Mammary epithelial cell (primary cell): ENCODE measurements at regions of chr2 and their contacts with region 1.

Region 1: GRCh38 chr2:215386566-215386965 is 49.3 kb downstream of the FN1 start:
- DNase-seq: no peak
- H3K4me3 ChIP-seq: no peak overlapping the region
- H3K27ac ChIP-seq: no peak overlapping the region
- H3K4me1 ChIP-seq: no peaks in the 10 kb centered on the region
- H3K27me3 ChIP-seq: no peaks in the 10 kb centered on the region
- CTCF ChIP-seq: no peak

Region 2: DNA sequence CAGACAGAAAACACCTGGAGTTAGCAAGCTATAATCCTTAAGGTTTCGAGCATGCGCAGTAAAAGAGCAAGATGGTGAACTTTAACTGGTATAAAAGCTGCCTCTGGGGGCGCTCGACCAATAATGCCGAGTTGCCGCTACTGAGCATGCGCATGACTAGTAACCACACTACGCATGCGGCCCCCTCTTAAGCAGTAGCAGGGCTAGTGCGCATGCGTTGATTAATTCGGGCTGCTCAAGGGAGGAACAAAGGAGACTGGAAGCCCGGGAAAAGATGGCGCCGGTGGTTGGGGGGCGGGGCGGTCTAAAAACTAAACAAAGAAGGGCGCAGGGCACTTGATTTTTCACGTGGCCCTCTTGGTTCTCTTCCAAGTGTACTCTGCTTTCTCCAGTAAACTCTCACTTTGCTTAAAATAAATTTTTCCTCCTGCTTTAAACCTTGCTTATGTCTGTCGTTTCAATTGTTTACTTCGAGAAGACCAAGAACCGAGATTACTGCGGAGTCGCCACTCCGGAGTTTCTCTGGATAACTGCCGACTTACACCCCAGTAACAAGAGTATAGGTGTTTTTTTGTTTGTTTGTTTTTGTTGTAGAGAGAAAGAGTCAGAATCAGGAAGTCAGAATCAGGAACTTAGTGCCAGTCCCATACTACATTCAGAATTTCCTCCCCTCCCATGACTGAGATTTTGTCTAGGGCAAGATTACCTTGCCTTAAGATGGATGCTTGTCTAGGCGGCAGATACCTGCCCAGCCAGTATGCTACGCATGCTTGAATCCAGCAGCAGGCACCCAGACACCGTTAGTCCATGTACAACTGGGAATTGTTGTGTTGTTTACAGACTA is 728.4 kb after region 1 on chr2:
- CTCF ChIA-PET with region 1: interaction called, 11 read pairs
- dilution Hi-C with region 1: no loop called
- in situ Hi-C with region 1: no loop called
- intact Hi-C with region 1: no loop called
- DNase-seq: peak; percentile 95
- H3K4me3 ChIP-seq: peak overlapping the region; percentile 37 to 84 (median 56)
- H3K27ac ChIP-seq: peak overlapping the region; percentile 80
- H3K4me1 ChIP-seq: peaks cover 21% of the 10 kb centered on the region
- H3K27me3 ChIP-seq: no peaks in the 10 kb centered on the region
- CTCF ChIP-seq: peak; percentile 81 to 94

Region 3: DNA sequence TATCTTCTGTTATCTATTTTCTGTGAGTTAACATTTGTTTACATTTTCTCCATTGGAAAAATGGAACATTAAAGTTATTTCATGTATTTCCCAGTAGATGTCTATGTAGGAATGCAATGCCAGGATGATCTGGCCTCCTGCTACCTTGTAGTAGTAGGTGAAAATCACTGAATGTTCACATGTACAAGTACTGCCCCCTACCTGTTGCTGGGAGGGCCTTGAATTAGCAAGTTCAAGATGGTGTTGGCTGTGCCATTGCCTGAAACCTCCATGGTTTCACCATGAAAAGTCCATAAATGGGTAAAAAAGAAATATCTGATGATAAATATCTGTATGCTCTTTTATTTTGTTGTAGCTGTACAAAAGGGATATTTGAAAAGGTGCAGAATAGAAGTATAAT is 753.3 kb after region 1 on chr2:
- CTCF ChIA-PET with region 1: no interaction called
- dilution Hi-C with region 1: no loop called
- in situ Hi-C with region 1: no loop called
- intact Hi-C with region 1: no loop called
- DNase-seq: peak; percentile 14
- H3K4me3 ChIP-seq: no peak overlapping the region
- H3K27ac ChIP-seq: no peak overlapping the region
- H3K4me1 ChIP-seq: no peaks in the 10 kb centered on the region
- H3K27me3 ChIP-seq: no peaks in the 10 kb centered on the region
- CTCF ChIP-seq: peak; percentile 37 to 42